ENCODE measurements at regions of chr22 and their contacts with region 1.

Region 1: GRCh38 chr22:40679964-40680818 is 907 bp downstream of the MCHR1 start:
- DNase-seq: no peak
- ATAC-seq: no peak
- H3K4me3 Mint-ChIP-seq: no peak overlapping the region
- H3K27ac Mint-ChIP-seq: no peak overlapping the region
- H3K4me1 Mint-ChIP-seq: peaks cover 14% of the 10 kb centered on the region
- H3K27me3 Mint-ChIP-seq: peaks cover 18% of the 10 kb centered on the region

Region 2: DNA sequence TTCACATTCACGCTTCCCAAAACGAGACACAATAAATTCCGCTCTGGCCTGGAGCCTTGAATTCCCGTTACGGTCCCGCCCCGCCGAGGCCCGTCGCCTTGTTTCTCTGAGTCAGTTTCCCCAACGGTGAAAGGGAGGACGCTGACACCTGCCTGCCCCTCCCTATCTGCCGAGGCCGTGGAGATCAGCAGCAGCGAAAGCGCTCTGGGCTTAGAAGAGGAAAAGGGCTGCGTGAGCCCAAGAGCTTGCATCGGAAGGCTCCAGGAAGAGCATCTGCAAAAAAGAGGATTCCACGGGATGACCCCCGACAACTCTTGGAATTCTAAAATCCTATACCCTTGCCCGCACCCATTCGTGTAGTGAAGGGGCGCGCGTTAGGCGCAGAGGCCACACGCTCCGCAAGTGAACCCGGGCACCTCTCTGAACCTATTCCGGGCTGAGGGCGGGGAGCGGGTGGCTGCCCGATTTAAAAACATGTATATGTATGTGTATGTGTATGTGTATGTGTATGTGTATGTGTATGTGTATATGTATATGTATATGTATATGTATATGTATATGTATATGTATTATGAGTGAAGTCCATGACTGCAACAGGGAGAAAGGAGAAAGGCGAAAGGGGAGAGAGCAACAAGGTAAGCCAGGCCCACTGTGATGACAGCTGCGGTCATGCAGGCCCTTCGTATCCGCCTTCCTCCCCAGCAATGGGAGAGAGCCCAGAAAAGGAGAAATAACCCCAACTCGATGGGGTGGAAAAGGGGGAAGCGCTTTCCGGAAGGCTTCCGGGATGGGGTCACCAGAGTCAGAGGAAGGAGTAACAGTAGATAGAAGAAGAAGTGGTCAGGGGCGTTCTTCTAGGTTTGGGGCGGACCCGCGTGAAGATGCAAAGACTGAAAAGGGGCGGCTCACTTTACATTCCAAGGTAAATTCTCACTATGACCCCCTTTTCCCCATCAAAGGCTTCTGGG is 42.7 kb before region 1 on chr22:
- POLR2A ChIA-PET with region 1: no interaction called
- DNase-seq: no peak
- ATAC-seq: peak; percentile 27
- H3K4me3 Mint-ChIP-seq: peak overlapping the region; percentile 94
- H3K27ac Mint-ChIP-seq: peak overlapping the region; percentile 96
- H3K4me1 Mint-ChIP-seq: peaks cover 23% of the 10 kb centered on the region
- H3K27me3 Mint-ChIP-seq: no peaks in the 10 kb centered on the region

Region 3: DNA sequence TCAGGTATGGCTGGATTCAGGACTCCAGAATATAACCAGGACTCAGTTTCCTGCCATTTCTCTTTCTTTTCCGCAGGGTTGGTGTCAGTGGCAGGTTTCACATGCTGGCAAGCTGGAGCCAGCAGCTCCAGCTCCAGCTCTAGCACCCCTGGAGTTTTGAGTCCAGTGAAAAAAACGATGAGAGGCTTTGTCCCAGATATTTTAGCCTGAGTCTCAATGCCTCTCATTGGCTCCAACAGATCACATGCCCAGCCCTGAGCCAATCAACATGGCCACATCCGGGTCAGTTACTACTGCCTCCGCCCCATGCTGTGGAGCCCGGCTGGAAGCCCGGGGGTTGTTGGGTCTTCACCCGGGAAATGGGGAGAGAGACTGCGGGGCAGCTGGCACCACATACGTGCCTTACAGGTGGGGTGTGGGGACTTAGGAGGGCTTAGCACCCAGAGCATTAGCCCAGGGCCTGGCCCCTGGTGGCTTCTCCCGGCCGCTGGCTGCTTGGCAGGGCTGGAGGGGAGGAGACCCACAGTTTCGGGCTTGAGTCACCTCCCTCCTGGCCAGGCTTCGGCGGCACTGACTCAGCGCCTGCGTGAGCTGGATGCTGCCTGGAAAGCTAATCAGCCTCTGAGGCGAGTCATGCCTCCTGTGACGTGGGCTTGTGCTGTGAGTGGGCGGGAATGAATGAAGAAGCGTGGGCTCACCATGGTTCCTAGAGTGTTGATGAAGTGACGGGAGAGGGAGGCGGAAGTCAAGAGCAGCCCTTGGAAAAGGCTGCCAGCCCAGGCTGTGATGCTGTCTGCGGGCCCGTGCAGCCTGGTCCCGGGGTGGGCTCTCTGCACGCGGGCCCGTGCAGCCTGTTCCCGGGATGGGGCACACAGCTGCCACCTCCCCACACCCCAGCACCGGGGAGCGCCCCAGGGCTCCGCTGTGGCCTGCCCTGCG is 28.4 kb before region 1 on chr22:
- POLR2A ChIA-PET with region 1: no interaction called
- DNase-seq: peak; percentile 52
- ATAC-seq: peak; percentile 82
- H3K4me3 Mint-ChIP-seq: peak overlapping the region; percentile 64
- H3K27ac Mint-ChIP-seq: peak overlapping the region; percentile 82
- H3K4me1 Mint-ChIP-seq: peaks cover 7% of the 10 kb centered on the region
- H3K27me3 Mint-ChIP-seq: peaks cover 2% of the 10 kb centered on the region

Region 4: GRCh38 chr22:40690370-40690769 is 10.2 kb after region 1 on chr22:
- POLR2A ChIA-PET with region 1: no interaction called
- DNase-seq: no peak
- ATAC-seq: no peak
- H3K4me3 Mint-ChIP-seq: no peak overlapping the region
- H3K27ac Mint-ChIP-seq: no peak overlapping the region
- H3K4me1 Mint-ChIP-seq: peaks cover 3% of the 10 kb centered on the region
- H3K27me3 Mint-ChIP-seq: no peaks in the 10 kb centered on the region

Region 5: DNA sequence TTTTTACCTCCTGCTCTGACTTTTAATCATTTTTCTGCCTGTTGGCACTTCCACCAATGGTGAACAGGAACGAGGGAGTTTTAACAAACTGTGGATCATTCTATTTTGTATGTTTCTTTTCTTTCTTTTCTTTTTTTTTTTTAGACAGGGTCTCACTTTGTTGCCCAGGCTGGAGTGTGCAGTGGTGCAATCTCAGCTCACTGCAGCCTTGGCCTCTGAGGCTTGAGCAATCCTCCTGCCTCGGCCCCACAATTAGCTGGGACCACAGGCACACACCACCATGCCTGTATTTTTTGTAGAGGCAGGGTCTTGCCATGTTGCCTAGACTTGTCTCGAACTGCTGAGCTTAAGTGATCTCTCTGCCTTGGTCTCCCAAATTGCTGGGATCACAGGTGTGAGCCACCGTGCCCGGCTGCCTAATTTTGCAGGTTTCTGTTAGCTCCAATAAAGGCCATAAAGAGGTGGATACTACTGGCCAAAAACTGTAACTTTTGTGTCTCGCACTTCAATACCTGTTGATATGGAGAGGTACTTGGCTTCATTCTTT is 79.2 kb after region 1 on chr22:
- POLR2A ChIA-PET with region 1: interaction called, 15 read pairs
- DNase-seq: no peak
- ATAC-seq: no peak
- H3K4me3 Mint-ChIP-seq: no peak overlapping the region
- H3K27ac Mint-ChIP-seq: no peak overlapping the region
- H3K4me1 Mint-ChIP-seq: peaks cover under 1% of the 10 kb centered on the region
- H3K27me3 Mint-ChIP-seq: no peaks in the 10 kb centered on the region

Measured in activated naive CD8-positive, alpha-beta T cell treated with anti-CD3 and anti-CD28 coated beads, Interleukin-2, amount 10 ng/mL, durations not matched to agents 7 days and 5 days (primary cell).